Transverse colon (tissue), 4 donors: ENCODE measurements at regions of chr3 and their contacts with region 1.

Region 1: DNA sequence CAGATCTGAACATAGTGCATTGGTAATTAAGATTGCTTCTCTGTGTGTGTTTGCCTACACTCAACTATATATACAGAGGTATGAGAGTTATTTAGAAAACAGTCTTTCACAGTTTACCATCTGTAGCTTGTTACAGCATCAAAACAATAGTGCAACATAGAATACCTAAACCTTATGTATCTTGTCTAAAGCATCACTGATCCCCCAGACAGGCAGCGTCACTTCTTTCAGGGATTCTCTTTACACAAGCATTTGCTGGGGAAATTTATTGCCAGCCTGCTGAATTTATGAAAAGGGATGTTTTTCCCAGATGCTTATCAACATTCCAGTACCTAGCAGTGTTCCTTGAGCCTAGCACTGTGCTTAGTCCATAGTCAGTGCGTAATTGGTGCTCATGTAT is 195.8 kb upstream of the COL8A1 start:
- DNase-seq: no peak
- H3K4me3 ChIP-seq: no peak overlapping the region
- H3K27ac ChIP-seq: no peak overlapping the region
- H3K4me1 ChIP-seq: no peaks in the 10 kb centered on the region
- H3K27me3 ChIP-seq: no peaks in the 10 kb centered on the region
- CTCF ChIP-seq: no peak
- EP300 ChIP-seq: no peak
- POLR2A ChIP-seq: no peak

Region 2: GRCh38 chr3:99394831-99395778 is 47.5 kb before region 1 on chr3:
- in situ Hi-C with region 1: no loop called
- intact Hi-C with region 1: loop called (anchors 1 kb)
- DNase-seq: no peak
- H3K4me3 ChIP-seq: no peak overlapping the region
- H3K27ac ChIP-seq: no peak overlapping the region
- H3K4me1 ChIP-seq: no peaks in the 10 kb centered on the region
- H3K27me3 ChIP-seq: no peaks in the 10 kb centered on the region
- CTCF ChIP-seq: no peak
- EP300 ChIP-seq: no peak
- POLR2A ChIP-seq: no peak